ENCODE measurements at regions of chr1 and their contacts with region 1.

Region 1: DNA sequence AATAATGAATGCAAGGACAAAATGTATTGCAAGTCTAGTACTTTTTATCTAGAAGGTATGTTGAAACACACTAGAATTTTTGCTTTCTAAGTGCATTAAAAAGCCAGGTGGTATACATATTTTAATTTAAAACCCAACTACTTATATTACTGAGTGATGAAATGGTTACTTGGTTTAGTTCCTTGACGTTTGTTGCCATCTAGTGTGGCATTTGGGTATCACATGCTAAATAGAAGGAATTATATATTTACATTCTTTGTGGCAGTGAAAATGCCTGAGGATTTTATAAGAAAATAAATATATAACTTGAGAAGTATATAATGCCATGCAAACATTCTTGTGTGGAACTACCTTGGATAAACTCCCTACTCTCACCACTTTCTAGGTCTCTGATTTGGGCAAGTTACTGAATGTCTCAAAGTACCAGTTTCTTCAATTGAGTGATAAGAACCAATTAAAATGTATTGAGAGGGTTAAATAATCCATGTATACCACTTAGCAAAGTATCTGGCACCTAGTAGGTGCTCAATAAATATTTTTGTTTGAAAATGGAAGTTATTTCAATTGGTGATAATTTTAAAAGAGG is 69.6 kb downstream of the SDCCAG8 start:
- DNase-seq: no peak
- H3K4me3 ChIP-seq: no peak overlapping the region
- H3K27ac ChIP-seq: no peak overlapping the region
- H3K4me1 ChIP-seq: no peaks in the 10 kb centered on the region
- H3K27me3 ChIP-seq: no peaks in the 10 kb centered on the region
- CTCF ChIP-seq: peak; percentile 76 to 85 (median 80)
- EP300 ChIP-seq: no peak
- POLR2A ChIP-seq: no peak

Region 2: GRCh38 chr1:242467556-242468145 is 857.7 kb before region 1 on chr1:
- intact Hi-C with region 1: loop called (anchors 5 kb)
- DNase-seq: no peak
- H3K4me3 ChIP-seq: no peak overlapping the region
- H3K27ac ChIP-seq: no peak overlapping the region
- H3K4me1 ChIP-seq: no peaks in the 10 kb centered on the region
- H3K27me3 ChIP-seq: peaks cover 0 to 13% (median 0%) of the 10 kb centered on the region in 4 donors
- CTCF ChIP-seq: peak; percentile 36 to 59 (median 38)
- EP300 ChIP-seq: no peak
- POLR2A ChIP-seq: no peak

Region 3: DNA sequence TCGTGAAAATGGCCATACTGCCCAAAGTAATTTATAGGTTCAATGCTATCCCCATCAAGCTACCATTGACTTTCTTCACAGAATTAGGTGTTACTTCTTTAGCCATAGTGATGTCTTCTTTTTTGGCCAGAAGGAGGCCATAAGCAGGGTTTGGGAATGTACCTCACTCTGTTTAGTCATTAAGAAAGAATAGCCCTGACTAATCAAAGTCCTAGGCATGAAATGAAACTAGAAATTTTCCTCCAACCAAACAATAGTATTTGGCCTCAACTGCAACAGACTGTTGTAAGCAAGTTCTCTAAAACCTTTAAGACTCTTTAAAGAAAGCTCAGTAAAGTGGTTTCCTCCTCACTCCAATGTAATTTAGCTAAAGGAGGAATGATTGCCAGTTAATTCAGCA is 360.8 kb after region 1 on chr1:
- intact Hi-C with region 1: no loop called
- DNase-seq: no peak
- H3K4me3 ChIP-seq: no peak overlapping the region
- H3K27ac ChIP-seq: no peak overlapping the region
- H3K4me1 ChIP-seq: peaks cover 0 to 5% (median 3%) of the 10 kb centered on the region in 4 donors
- H3K27me3 ChIP-seq: no peaks in the 10 kb centered on the region
- CTCF ChIP-seq: no peak
- EP300 ChIP-seq: no peak
- POLR2A ChIP-seq: no peak